Vagina (tissue), 2 donors: ENCODE measurements at regions of chr15 and their contacts with region 1.

Region 1: GRCh38 chr15:97728791-97729190 is 231.7 kb upstream of the ARRDC4 start:
- DNase-seq: no peak
- H3K4me3 ChIP-seq: no peak overlapping the region
- H3K27ac ChIP-seq: no peak overlapping the region
- H3K4me1 ChIP-seq: no peaks in the 10 kb centered on the region
- H3K27me3 ChIP-seq: no peaks in the 10 kb centered on the region
- CTCF ChIP-seq: no peak
- POLR2A ChIP-seq: no peak

Region 2: GRCh38 chr15:97791824-97792792 is 63.3 kb after region 1 on chr15:
- intact Hi-C with region 1: no loop called
- DNase-seq: no peak
- H3K4me3 ChIP-seq: no peak overlapping the region
- H3K27ac ChIP-seq: no peak overlapping the region
- H3K4me1 ChIP-seq: no peaks in the 10 kb centered on the region
- H3K27me3 ChIP-seq: no peaks in the 10 kb centered on the region
- CTCF ChIP-seq: no peak
- POLR2A ChIP-seq: no peak

Region 3: DNA sequence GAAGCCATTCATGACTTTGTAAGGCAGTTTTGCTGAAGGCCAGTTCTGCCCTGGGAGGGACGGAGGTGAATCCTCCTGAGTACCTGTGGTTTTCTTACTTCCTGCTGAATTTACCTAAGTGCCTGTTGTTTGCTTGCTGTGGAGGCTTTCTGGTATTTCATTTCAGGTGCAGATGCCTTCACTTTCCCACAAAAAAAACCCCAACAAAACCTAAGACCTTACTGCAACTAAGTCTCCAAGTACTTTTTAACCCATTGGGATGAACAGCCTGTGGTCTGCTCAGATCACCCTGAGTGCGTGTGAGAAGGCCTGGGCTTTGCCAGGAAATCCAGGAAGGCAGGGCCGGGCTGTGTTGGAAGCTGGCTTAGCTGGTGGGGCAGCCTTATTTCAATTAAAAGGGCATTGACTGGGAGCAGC is 984.8 kb after region 1 on chr15:
- intact Hi-C with region 1: loop called (anchors 10 kb)
- DNase-seq: no peak
- H3K4me3 ChIP-seq: no peak overlapping the region
- H3K27ac ChIP-seq: peak overlapping the region; percentile 40
- H3K4me1 ChIP-seq: peaks cover 64% of the 10 kb centered on the region
- H3K27me3 ChIP-seq: no peaks in the 10 kb centered on the region
- CTCF ChIP-seq: no peak
- POLR2A ChIP-seq: no peak